Head of caudate nucleus (tissue), 42 donors: ENCODE measurements at regions of chr1 and their contacts with region 1.

Region 1: GRCh38 chr1:228082135-228082891 is at the start of gene ARF1:
- DNase-seq: peak; percentile 71 to 96 (median 91)

Region 2: DNA sequence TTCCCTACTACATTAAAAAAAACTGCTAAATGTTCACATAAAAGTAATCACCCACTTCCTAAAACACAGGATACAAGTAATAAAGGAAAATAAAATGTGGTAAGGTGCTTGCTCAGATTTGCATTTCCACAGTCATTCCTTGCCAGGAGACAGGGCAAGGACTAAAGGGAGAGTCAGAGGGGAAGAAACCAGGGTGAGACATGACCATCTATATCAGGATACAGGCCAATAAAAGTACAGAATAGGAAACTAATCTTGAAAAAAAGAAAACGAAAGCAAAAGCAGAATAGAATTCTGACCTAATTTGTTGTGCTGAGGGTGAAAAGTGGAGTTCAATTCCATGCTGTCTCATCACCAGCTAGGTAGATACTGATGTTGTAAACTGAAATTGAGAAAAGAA is 374.5 kb before region 1 on chr1:
- intact Hi-C with region 1: no loop called
- DNase-seq: no peak

Region 3: DNA sequence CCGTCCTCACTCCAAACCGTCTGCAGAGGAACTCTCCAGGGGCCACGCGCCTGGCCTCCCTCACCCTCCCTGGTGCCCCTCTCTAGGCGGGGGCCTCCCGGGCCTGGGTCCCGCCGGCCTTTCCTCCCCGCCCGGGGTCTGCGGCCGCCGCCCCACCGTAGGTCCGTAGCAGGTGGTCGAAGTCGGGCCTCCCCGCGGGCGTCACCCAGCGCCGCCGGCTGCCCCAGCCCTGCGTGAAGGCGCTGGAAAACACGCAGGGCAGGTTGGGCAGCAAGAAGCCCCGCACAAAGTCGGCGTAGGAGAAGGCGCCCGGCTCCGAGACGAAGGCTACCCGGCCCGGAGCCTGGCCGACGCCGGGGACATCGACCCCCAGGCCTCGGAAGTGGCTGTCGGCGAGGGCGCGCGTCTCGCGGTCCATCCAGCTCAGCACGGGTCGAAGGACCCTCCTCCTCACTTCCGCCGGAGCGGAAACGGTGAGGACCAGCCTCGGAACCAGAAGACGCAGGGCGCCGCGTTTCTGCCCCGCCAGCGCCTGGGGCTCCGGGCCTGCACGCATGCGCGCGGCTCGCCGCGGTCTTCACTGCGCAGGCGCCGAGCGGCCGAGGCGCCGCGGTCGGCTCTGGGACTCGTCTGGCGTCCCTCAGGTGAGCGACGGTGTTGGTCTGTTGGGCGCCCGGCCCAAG is 347.3 kb before region 1 on chr1 and contains the starts of genes JMJD4 and SNAP47:
- intact Hi-C with region 1: loop called (anchors 10 kb)
- DNase-seq: peak; percentile 71 to 96 (median 91)

Region 4: DNA sequence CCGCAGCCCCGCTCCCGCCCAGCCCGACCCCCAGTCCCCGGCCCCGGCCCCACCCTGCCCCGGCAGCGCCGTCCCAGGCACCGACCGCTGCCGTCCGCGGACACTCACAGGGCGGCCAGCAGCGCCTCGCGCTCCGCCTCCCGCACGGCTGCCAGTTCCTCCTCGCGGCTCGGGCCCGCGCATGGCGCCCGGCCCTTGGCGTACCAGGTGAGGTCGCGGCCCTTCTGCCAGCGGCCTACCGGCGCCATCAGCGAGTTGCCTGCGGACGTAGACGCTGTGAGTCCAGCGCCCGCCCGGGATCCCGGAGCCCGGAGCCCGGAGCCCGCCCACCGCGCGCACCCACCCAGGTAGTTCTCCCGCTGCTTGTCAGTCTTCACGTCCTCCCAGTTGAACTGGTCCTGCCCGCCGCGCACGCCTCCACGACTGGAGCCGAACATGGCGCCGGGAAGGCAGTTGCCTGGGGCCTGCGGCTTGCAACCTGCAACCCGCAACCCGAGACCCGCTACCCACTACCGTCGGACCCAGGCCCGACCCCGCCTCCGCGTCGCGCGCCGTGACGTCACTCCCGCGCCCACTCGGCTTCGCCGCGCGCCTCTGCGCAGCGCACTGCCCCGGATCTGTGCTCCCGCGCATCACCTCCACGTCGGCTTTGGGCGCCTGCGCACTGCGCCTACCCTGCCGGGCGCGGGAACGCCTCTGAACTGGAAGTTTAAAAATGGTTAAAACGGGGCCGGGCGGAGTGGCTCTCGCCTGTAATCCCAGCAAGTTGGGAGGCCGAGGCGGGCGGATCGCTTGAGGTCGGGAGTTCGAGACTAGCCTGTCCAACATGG is 20.7 kb after region 1 on chr1 and contains the start of gene C1orf35:
- intact Hi-C with region 1: loop called (anchors 2 kb)
- DNase-seq: peak; percentile 77 to 96 (median 90)